Left cardiac atrium (tissue), 4 donors: ENCODE measurements at regions of chr21 and their contacts with region 1.

Region 1: GRCh38 chr21:39125752-39126485 is 57.3 kb downstream of the PSMG1 start:
- DNase-seq: peak; percentile 40
- ATAC-seq: peak; percentile 93 to 95

Region 2: DNA sequence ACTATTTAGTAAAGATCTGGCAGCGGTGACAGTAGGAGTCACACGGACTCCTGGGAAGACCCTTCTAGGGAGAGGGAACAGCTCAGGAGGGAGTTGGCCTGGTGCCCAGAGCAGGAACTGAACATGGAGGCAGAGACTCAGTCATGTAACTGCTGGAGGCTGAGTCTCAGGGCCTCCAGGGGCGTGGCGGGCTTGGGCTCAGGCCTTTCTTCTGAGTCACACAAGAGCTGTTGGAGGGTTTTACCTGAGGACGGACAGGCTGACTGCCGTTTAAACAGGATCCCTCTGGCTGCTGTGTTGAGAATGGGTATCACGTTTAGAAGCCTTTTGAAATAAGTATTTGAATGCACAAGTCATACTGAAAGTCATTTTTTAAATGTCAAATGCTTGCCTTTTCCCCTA is 327.4 kb before region 1 on chr21:
- intact Hi-C with region 1: loop called in 1 of 2 experiments (anchors 5 kb)
- DNase-seq: peak; percentile 38
- ATAC-seq: peak in 1 of 2 donors; percentile 68

Region 3: GRCh38 chr21:39105341-39105765 is 20.6 kb before region 1 on chr21:
- intact Hi-C with region 1: no loop called
- DNase-seq: no peak
- ATAC-seq: no peak

Region 4: DNA sequence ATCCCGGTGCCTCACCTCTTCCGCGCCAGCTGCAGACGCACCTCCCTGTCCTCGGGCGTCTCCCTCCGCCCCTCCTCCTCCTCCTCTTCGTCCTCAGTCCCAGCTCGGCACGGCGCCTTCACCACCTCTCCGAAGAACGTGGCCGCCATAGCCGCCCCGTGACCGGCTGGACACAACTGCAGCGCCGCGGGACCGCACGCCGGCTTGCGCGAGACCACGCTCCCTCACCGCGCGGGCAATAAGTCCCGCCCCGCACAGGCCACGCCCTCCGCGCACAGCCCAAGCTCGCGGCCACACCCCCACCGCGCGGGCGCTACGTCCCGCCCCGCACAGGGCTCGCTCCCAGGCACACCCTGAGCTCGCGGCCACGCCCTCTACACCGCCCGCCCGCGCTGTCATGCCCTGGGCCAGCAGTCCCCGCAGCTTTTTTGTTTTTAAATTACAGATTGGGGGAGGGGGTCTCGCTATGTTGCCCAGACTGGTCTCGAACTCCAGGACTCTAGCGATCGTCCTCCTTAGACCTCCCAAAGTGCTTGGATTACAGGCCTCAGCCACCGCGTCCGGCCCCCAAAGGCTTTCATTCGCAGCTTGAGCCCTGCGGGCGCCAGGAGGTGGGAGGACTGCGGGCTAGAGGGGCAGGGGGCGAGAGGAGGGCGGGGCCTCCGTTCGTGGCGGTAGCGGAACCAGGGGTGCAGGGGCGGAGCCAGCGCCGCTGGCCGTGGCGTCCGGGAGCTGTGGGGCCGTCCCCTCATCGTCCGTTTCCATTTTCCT is 57.5 kb after region 1 on chr21 and contains the start of gene PSMG1:
- intact Hi-C with region 1: no loop called
- DNase-seq: peak; percentile 97
- ATAC-seq: peak; percentile 98
- total RNA-seq, gene PSMG1: 21.3 to 30.6 TPM

Region 5: GRCh38 chr21:39217356-39218081 is 91.6 kb after region 1 on chr21:
- intact Hi-C with region 1: no loop called
- DNase-seq: no peak
- ATAC-seq: no peak